GM13977 (cell line): ENCODE measurements at regions of chr2 and their contacts with region 1.

Region 1: DNA sequence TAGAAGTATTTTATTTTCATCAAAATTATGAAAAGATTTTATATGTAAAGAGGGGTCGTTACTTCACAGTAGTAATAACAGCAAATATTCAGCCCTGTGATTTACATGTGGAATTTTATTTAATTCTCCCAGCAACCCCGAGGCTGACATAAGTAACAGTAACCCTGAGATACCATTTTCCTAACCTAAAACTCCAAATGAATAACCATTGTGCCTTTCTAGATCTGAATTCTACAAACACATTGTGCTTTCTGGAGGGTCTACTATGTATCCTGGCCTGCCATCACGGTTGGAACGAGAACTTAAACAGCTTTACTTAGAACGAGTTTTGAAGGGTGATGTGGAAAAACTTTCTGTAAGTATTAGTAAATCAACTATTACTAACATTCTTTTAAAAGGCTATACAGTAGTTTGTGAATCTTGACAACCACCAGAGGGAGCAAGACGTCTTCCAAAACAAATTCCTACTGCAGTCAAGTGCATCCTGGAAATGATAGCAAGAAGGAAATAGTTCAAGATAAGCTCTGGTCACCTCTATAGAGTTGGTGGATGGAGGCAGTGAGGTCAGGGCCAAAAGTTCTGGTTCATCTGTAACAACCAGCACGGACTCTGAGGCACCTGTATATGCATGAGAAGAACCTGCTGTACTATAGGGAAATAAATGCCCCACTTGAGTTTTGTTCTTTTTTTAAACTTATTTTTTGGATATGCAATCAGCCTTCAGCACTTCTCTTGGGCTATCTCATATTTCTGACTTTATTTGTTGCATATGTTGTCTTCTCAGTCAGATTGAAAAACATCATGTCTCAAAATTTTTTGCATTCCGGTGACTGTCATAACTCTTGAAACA is 37.4 kb downstream of the ACTR2 start:
- DNase-seq: no peak
- CTCF ChIP-seq: peak; percentile 50

Region 2: DNA sequence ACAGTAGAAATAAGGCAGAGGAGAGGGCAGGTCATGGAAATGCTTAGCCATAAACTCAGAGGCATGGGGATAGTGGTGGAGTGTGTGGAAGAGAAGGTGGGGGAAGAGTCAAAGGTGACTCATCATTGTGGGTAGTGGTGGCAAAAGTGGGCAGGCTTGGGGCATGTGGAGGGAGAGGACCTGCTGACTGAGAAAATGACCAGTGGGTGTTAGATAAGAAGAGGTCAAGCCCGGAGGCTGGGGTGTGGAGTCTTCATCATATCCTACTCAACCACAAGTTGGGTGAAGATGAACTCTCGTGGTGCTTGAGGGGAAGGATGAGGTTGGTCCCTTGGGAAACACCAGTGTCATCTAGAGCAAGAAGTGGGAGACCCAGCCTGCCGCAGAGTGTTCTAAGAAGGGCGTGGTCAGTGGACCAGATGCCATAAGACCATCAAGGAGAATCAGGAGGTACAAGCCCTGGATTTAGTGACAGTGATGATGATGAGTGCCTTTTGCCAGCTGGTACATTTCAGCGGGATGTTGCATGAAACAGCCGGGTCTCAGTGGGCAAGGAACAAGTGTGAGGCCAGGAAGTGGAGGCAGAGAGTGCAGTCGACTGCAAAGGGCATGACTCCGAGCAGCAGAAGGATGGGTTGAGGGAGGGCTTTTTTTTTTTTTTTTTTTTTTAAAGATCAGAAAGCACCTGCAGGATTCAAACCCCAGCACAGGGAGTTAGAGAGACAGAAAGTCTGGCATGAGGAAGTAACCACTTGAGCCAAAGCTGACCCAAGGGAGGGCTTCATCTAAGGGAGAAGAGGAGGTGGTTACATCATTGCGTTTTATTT is 289.9 kb after region 1 on chr2:
- in situ Hi-C with region 1: loop called (anchors 10 kb)
- DNase-seq: no peak
- CTCF ChIP-seq: no peak

Region 3: DNA sequence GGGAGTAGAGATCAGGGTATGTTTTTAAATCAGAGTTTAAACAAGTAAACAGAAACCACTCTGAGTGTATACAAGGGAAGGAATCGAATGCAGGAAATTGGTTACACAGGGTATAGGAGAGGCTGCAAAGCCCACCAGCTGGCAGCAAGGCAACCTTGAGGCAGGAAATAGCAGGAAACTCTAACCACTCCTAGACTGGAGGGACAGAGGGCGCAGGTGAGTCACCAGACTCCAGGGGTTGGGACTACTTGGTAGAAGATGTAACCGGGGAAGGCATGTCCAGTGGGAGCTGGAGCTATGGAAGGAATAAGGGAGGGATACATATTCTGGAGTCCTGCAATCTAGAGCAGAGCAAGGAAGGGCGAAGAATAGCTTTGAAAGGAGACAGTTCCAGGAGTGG is 1322.2 kb after region 1 on chr2:
- in situ Hi-C with region 1: no loop called
- DNase-seq: no peak
- CTCF ChIP-seq: no peak